ENCODE measurements at regions of chr2 and their contacts with region 1.

Region 1: GRCh38 chr2:86764661-86765307 is 25.9 kb downstream of the CD8A start:
- DNase-seq: no peak
- H3K4me3 Mint-ChIP-seq: no peak overlapping the region
- H3K27ac Mint-ChIP-seq: no peak overlapping the region
- H3K4me1 Mint-ChIP-seq: peaks cover 9% of the 10 kb centered on the region
- H3K27me3 Mint-ChIP-seq: no peaks in the 10 kb centered on the region

Region 2: GRCh38 chr2:86632672-86633651 is 131.8 kb before region 1 on chr2:
- CTCF ChIA-PET with region 1: no interaction called
- POLR2A ChIA-PET with region 1: no interaction called
- DNase-seq: no peak
- H3K4me3 Mint-ChIP-seq: no peak overlapping the region
- H3K27ac Mint-ChIP-seq: no peak overlapping the region
- H3K4me1 Mint-ChIP-seq: no peaks in the 10 kb centered on the region
- H3K27me3 Mint-ChIP-seq: peaks cover 13% of the 10 kb centered on the region

Region 3: GRCh38 chr2:86661333-86661732 is 103.5 kb before region 1 on chr2:
- CTCF ChIA-PET with region 1: no interaction called
- POLR2A ChIA-PET with region 1: no interaction called
- DNase-seq: no peak
- H3K4me3 Mint-ChIP-seq: no peak overlapping the region
- H3K27ac Mint-ChIP-seq: no peak overlapping the region
- H3K4me1 Mint-ChIP-seq: no peaks in the 10 kb centered on the region
- H3K27me3 Mint-ChIP-seq: no peaks in the 10 kb centered on the region

Region 4: DNA sequence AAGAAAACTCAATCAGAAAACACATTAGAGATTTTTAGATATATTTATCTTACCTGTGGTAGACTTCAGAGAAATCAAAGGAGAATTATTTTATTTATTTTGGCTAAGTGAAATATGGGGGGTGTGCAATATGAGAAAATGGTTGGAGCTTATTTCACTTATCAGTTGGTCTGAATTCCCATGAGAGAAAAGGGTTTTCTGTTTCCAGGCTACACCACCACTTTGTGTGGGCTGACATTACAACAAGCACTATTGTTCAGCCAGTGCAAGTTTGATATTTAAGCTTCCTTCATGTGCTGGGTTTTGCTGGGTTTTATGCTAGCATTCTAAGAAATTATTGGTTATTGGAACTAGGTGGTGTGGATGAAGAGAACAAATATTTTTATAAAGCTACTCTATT is 11.2 kb before region 1 on chr2:
- CTCF ChIA-PET with region 1: interaction called, 18 read pairs
- POLR2A ChIA-PET with region 1: interaction called, 3 read pairs
- DNase-seq: no peak
- H3K4me3 Mint-ChIP-seq: no peak overlapping the region
- H3K27ac Mint-ChIP-seq: no peak overlapping the region
- H3K4me1 Mint-ChIP-seq: no peaks in the 10 kb centered on the region
- H3K27me3 Mint-ChIP-seq: no peaks in the 10 kb centered on the region

Region 5: GRCh38 chr2:86808315-86809161 is 43.8 kb after region 1 on chr2:
- CTCF ChIA-PET with region 1: interaction called, 11 read pairs
- POLR2A ChIA-PET with region 1: interaction called, 3 read pairs
- DNase-seq: peak; percentile 92
- H3K4me3 Mint-ChIP-seq: peak overlapping the region; percentile 78
- H3K27ac Mint-ChIP-seq: no peak overlapping the region
- H3K4me1 Mint-ChIP-seq: peaks cover 27% of the 10 kb centered on the region
- H3K27me3 Mint-ChIP-seq: peaks cover 60% of the 10 kb centered on the region

Measured in activated CD4-positive, alpha-beta memory T cell treated with anti-CD3 and anti-CD28 coated beads, Interleukin-2, amount 10 ng/mL, durations not matched to agents 7 days and 5 days (primary cell).